ENCODE measurements at regions of chr1 and their contacts with region 1.

Region 1: GRCh38 chr1:89552471-89553081 is 27.9 kb downstream of the LRRC8B start:
- DNase-seq: no peak
- ATAC-seq: peak; percentile 79
- H3K4me3 Mint-ChIP-seq: peak overlapping the region; percentile 79
- H3K27ac Mint-ChIP-seq: peak overlapping the region; percentile 87
- H3K4me1 Mint-ChIP-seq: peaks cover 46% of the 10 kb centered on the region
- H3K27me3 Mint-ChIP-seq: no peaks in the 10 kb centered on the region
- CTCF ChIP-seq: no peak

Region 2: GRCh38 chr1:89536555-89537341 is 15.8 kb before region 1 on chr1:
- CTCF ChIA-PET with region 1: no interaction called
- POLR2A ChIA-PET with region 1: no interaction called
- intact Hi-C with region 1: loop called (anchors 2 kb)
- DNase-seq: no peak
- ATAC-seq: no peak
- H3K4me3 Mint-ChIP-seq: no peak overlapping the region
- H3K27ac Mint-ChIP-seq: no peak overlapping the region
- H3K4me1 Mint-ChIP-seq: peaks cover 11% of the 10 kb centered on the region
- H3K27me3 Mint-ChIP-seq: no peaks in the 10 kb centered on the region
- CTCF ChIP-seq: no peak

Region 3: GRCh38 chr1:89566761-89567174 is 14.2 kb after region 1 on chr1:
- CTCF ChIA-PET with region 1: no interaction called
- POLR2A ChIA-PET with region 1: no interaction called
- intact Hi-C with region 1: loop called (anchors 2 kb)
- DNase-seq: no peak
- ATAC-seq: no peak
- H3K4me3 Mint-ChIP-seq: no peak overlapping the region
- H3K27ac Mint-ChIP-seq: no peak overlapping the region
- H3K4me1 Mint-ChIP-seq: peaks cover 31% of the 10 kb centered on the region
- H3K27me3 Mint-ChIP-seq: no peaks in the 10 kb centered on the region
- CTCF ChIP-seq: no peak

Region 4: GRCh38 chr1:89739013-89739843 is 186.7 kb after region 1 on chr1:
- CTCF ChIA-PET with region 1: no interaction called
- POLR2A ChIA-PET with region 1: no interaction called
- intact Hi-C with region 1: no loop called
- DNase-seq: no peak
- ATAC-seq: peak; percentile 34
- H3K4me3 Mint-ChIP-seq: no peak overlapping the region
- H3K27ac Mint-ChIP-seq: peak overlapping the region; percentile 16
- H3K4me1 Mint-ChIP-seq: peaks cover 11% of the 10 kb centered on the region
- H3K27me3 Mint-ChIP-seq: no peaks in the 10 kb centered on the region
- CTCF ChIP-seq: no peak

Measured in activated B cell treated with CpG ODN at 0.5 μM for 24 hours (primary cell).